ENCODE measurements at regions of chr6 and their contacts with region 1.

Region 1: DNA sequence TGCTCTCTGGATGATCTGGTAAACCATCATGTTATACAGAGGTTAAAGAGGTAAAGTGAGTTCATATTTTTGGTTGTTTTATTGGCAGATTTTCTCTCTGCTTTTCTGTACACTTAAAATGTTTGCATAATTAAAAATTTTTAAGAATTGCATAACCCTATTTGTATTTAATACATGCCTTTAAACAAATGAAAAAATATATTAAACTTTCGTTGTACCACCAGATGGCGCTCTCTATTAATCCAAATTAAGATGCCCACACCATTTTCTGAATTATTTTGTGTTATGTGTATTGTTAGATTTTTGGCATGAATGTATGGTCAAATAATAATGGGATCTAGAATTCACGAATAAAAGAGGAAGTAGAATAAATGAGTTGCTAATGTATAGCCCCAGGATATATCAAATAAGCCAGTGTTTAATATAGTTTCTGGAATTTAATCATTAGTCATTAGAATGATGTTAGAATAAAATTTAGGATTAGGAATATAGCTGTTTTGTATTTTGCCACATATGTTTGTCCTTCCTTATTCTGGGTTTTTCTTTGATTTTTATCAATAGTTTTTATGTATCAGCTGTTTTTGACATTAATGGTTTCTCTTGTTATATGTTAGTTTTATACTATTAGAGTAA is 38.9 kb downstream of the SMAP1 start:
- DNase-seq: no peak
- ATAC-seq: no peak
- H3K4me3 Mint-ChIP-seq: no peak overlapping the region
- H3K27ac Mint-ChIP-seq: no peak overlapping the region
- H3K4me1 Mint-ChIP-seq: peaks cover 29% of the 10 kb centered on the region
- H3K27me3 Mint-ChIP-seq: no peaks in the 10 kb centered on the region
- CTCF ChIP-seq: peak; percentile 93

Region 2: DNA sequence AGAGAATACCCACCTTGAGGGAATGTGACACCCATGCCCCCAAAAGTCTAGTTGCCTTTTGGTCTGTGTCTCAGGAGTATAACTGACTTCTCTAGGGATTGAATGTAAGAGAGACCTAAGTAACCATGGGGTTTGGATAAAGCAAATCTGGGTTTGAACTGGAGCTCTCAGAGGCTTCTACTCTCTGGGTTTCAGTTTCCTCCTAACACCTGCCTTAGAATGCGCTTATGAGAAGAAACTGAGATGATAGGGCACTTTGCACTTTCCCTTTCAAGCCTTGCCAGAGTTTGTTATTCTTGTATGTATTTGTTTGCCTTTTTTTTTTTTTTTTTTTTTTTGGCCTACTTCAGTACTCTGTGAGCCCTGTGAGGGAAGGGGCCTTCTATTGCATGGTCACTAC is 120.5 kb before region 1 on chr6:
- CTCF ChIA-PET with region 1: no interaction called
- POLR2A ChIA-PET with region 1: no interaction called
- intact Hi-C with region 1: no loop called
- DNase-seq: no peak
- ATAC-seq: peak; percentile 17
- H3K4me3 Mint-ChIP-seq: no peak overlapping the region
- H3K27ac Mint-ChIP-seq: peak overlapping the region; percentile 13
- H3K4me1 Mint-ChIP-seq: peaks cover 3% of the 10 kb centered on the region
- H3K27me3 Mint-ChIP-seq: no peaks in the 10 kb centered on the region
- CTCF ChIP-seq: no peak

Region 3: DNA sequence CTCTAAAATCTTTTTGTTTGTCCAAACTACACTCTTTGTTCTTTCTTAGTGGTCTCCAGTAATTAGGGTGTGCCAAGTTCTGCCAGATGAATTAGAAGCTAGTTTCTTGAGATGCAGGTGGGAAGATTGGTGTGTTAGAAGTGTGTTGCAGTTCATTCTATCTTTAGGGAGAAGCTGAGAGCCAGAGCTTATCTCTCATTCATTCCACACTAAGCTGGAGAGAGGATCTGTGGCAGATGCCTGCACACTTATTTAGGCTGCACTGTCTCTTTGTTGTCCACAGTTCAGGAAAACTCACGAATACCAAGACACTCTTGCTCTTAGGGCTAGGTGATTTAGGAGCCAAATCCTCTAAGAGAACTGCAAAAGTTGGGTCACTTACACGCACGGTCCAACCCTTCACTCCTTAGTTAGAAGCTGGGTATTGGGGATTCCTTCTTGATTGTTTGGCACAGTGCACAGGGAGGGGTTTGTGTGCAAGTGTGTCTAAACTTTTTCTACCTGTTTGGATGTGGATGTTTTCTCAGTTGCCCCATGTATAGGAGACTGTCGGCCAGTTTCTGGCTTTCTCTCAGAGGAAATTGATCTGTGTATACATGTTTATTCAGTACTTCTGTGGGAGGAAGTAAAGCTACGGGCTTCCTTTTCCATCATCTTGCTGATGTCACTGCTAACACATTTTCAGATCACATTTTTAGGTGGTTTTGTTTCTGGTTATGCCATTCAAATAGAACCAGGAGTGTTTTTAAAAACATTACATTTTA is 10.6 kb after region 1 on chr6:
- CTCF ChIA-PET with region 1: interaction called, 33 read pairs
- POLR2A ChIA-PET with region 1: no interaction called
- intact Hi-C with region 1: no loop called
- DNase-seq: peak; percentile 14
- ATAC-seq: peak; percentile 89
- H3K4me3 Mint-ChIP-seq: no peak overlapping the region
- H3K27ac Mint-ChIP-seq: peak overlapping the region; percentile 21
- H3K4me1 Mint-ChIP-seq: peaks cover 44% of the 10 kb centered on the region
- H3K27me3 Mint-ChIP-seq: no peaks in the 10 kb centered on the region
- CTCF ChIP-seq: no peak

Region 4: GRCh38 chr6:70955441-70956190 is 249.0 kb after region 1 on chr6:
- CTCF ChIA-PET with region 1: interaction called, 42 read pairs
- POLR2A ChIA-PET with region 1: no interaction called
- intact Hi-C with region 1: loop called (anchors 5 kb)
- DNase-seq: peak; percentile 92
- ATAC-seq: peak; percentile 95
- H3K4me3 Mint-ChIP-seq: peak overlapping the region; percentile 70
- H3K27ac Mint-ChIP-seq: no peak overlapping the region
- H3K4me1 Mint-ChIP-seq: peaks cover 16% of the 10 kb centered on the region
- H3K27me3 Mint-ChIP-seq: peaks cover 62% of the 10 kb centered on the region
- CTCF ChIP-seq: peak; percentile 96

Region 5: DNA sequence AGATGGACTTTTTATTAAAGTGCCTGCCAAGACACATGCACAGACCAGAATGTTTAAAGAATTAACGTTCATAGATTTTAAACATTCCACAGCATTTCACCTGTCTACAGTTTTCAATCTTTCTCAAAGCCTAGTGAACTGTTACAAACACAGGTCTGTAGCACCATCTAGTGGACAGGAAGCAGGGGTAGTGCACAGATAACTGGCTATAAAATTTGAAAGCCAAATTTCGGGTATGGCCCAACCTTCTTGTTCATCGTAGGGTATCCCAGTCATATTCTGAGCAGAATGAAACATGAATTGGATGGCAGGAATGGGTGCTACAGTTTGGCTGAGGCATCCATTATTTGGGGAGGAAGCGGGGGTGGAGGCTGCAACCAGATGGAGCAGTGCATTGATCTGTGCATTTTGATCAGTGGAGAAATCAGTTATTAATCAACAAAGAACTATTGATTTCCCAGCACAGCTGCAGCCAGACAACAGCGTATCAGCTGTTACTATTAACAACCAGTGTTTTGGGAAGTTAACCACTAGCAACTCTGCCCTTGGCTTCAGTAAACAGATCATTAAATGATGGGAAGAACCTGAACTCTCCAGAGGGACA is 306.4 kb after region 1 on chr6:
- CTCF ChIA-PET with region 1: interaction called, 7 read pairs
- POLR2A ChIA-PET with region 1: no interaction called
- intact Hi-C with region 1: loop called (anchors 2 kb)
- DNase-seq: peak; percentile 15
- ATAC-seq: peak; percentile 51
- H3K4me3 Mint-ChIP-seq: no peak overlapping the region
- H3K27ac Mint-ChIP-seq: no peak overlapping the region
- H3K4me1 Mint-ChIP-seq: no peaks in the 10 kb centered on the region
- H3K27me3 Mint-ChIP-seq: peaks cover 10% of the 10 kb centered on the region
- CTCF ChIP-seq: peak; percentile 76

Measured in activated CD8-positive, alpha-beta T cell treated with anti-CD3 and anti-CD28 coated beads for 36 hours (primary cell).